Activated CD4-positive, alpha-beta T cell treated with anti-CD3 and anti-CD28 coated beads, Interleukin-2, amount 10 ng/mL, durations not matched to agents 7 days and 5 days (primary cell): ENCODE measurements at regions of chr1 and their contacts with region 1.

Region 1: GRCh38 chr1:152459596-152460528 is 45.8 kb upstream of the CRNN start:
- DNase-seq: peak; percentile 77
- H3K4me3 Mint-ChIP-seq: peak overlapping the region; percentile 42
- H3K27ac Mint-ChIP-seq: peak overlapping the region; percentile 88
- H3K4me1 Mint-ChIP-seq: peaks cover 31% of the 10 kb centered on the region
- H3K27me3 Mint-ChIP-seq: peaks cover 6% of the 10 kb centered on the region

Region 2: GRCh38 chr1:152189657-152190442 is 270.0 kb before region 1 on chr1:
- CTCF ChIA-PET with region 1: interaction called, 53 read pairs
- POLR2A ChIA-PET with region 1: no interaction called
- DNase-seq: peak; percentile 69
- H3K4me3 Mint-ChIP-seq: peak overlapping the region; percentile 43
- H3K27ac Mint-ChIP-seq: peak overlapping the region; percentile 26
- H3K4me1 Mint-ChIP-seq: peaks cover 6% of the 10 kb centered on the region
- H3K27me3 Mint-ChIP-seq: peaks cover 37% of the 10 kb centered on the region

Region 3: DNA sequence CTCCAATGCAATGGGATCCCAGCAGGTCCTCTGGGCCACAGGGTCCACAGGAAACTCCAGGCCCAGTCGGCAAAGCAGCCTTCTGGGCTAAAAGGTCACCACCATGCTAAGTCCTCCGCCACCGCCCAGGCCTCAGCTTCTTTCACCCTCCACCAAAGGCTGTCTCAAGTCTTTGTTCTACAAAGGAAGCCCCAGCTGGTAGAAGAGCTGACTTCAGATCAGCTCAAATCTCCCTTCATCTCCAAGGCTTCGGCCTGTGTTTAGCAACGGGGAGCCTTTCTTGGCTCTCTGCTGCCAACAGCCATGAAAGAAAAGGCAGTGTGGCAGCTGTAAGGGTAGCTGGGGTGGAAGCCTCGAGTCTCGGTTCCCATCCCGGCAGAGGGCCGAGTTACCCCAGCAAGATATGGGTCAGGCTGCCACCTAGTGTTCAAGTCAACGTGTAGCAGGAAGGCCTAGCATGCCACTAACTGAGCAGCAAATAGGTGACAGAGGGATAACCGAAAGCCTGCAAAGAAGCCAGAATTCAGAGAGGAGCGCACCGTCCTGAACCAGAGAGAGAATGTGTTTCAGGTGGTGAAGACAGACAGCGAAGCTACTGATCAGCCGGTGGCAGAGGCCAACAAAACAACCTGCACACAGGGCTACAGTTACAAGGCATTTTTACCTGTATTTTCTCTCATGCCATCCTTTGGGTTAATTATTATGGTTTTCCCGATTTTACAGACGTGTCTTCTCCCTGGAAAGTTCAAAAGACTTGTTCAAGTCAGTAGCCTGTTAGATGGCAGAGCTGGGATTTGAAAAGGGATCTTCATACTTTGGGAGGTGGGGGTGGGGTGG is 19.0 kb before region 1 on chr1:
- CTCF ChIA-PET with region 1: interaction called, 15 read pairs
- POLR2A ChIA-PET with region 1: no interaction called
- DNase-seq: peak; percentile 77
- H3K4me3 Mint-ChIP-seq: no peak overlapping the region
- H3K27ac Mint-ChIP-seq: no peak overlapping the region
- H3K4me1 Mint-ChIP-seq: peaks cover 2% of the 10 kb centered on the region
- H3K27me3 Mint-ChIP-seq: peaks cover 10% of the 10 kb centered on the region

Region 4: DNA sequence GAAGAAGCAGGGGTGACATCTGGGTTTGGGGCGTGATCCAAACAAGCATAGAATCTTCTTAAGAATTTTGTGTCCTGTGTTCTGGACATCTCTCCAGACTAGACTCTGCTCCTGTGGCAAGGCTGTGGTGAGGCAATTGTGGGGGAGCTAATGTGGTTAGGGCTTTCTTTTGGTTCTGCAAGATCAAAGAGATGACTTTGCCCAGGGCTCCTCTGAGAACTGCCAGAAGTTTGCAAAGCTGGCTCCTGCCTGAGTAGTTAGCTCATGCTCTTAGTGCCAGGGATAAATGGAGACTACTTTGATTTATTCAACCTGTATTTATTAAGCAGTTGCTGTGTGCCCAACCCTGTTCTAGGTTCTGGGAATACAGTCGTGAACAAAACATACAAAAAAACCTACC is 11.8 kb before region 1 on chr1:
- CTCF ChIA-PET with region 1: interaction called, 21 read pairs
- POLR2A ChIA-PET with region 1: no interaction called
- DNase-seq: peak; percentile 10
- H3K4me3 Mint-ChIP-seq: no peak overlapping the region
- H3K27ac Mint-ChIP-seq: no peak overlapping the region
- H3K4me1 Mint-ChIP-seq: no peaks in the 10 kb centered on the region
- H3K27me3 Mint-ChIP-seq: peaks cover 12% of the 10 kb centered on the region

Region 5: DNA sequence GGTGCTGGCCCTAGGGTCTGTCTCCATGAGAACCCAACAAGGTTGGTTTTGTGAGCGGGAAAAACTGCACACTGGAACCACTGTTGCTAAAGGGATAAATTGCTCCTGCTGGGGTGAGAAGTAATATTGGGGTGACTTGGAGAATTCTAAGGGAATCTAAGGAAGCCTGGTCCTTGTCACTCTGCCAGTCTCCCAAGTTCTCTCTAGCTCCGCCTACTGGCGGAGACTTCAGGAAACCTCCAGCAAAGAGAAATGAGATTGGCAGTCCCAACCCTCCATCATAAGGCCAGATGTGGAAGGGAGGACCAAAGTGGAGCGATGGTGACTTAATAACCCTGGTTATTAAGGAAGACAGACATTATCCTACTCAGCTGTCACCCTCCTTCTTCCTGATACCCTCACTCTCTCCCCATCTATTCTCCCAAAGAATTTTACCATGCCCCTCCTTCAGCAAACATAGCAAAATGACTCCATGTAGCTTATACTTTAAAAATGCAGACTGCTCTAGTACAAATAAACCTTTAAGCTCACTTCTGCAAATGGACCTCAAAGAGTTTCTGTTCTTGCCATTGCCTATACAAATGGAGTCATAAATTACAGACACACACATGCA is 317.8 kb after region 1 on chr1:
- CTCF ChIA-PET with region 1: no interaction called
- POLR2A ChIA-PET with region 1: no interaction called
- DNase-seq: no peak
- H3K4me3 Mint-ChIP-seq: no peak overlapping the region
- H3K27ac Mint-ChIP-seq: no peak overlapping the region
- H3K4me1 Mint-ChIP-seq: no peaks in the 10 kb centered on the region
- H3K27me3 Mint-ChIP-seq: peaks cover 8% of the 10 kb centered on the region